Psoas muscle (tissue), 8 donors: ENCODE measurements at regions of chr19 and their contacts with region 1.

Region 1: DNA sequence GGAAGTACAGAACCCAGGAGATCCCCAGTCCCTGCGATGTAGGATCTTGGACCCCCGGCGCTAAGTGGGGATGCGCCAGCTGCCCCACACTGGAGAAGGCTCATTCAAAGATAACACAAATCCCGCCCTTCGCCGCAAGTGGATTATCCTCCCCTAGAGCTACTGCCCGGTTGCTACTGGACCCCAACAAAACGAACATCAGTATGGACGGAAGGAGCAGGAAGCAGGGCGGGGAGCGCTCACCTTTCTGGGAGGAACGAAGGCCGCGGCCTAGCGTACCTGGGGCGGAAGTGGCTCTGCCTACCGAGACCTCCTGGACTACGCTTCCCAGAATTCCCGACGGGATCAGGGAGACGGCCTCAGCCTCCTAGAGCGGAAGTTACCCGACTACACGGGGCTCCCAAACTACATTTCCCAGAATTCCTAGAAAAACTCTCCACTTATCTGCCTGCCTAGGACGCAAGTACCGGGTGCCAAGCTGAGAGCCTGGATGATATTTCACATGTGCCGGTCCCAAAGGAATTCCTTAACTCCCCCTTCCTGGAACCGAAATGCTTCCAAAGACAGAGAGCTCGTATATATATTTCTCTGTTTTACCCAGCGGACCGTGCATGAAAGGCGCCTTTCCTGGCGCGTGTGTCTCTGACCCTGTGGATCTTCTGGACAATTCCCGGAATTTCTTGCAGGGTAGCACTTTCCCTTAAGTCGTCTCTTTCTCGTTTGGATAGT is at the start of gene ZNF112:
- DNase-seq: peak; percentile 80 to 91
- ATAC-seq: peak; percentile 98 to 100 (median 100)
- H3K4me3 ChIP-seq: peak within 1 kb of the TSS; percentile 79
- H3K27ac ChIP-seq: peak within 1 kb of the TSS; percentile 55
- H3K4me1 ChIP-seq: peaks cover 5% of the 10 kb centered on the region
- H3K27me3 ChIP-seq: no peaks in the 10 kb centered on the region
- CTCF ChIP-seq: no peak
- total RNA-seq, gene ZNF112: 1.4 to 4.8 (median 1.7) TPM

Region 2: GRCh38 chr19:44113138-44113783 is 243.3 kb before region 1 on chr19 and contains the start of gene ZNF225:
- intact Hi-C with region 1: loop called in 1 of 2 experiments (anchors 10 kb)
- DNase-seq: peak; percentile 93 to 95
- ATAC-seq: peak; percentile 99 to 100 (median 100)
- H3K4me3 ChIP-seq: peak within 1 kb of the TSS; percentile 93
- H3K27ac ChIP-seq: peak within 1 kb of the TSS; percentile 88
- H3K4me1 ChIP-seq: peaks cover 15% of the 10 kb centered on the region
- H3K27me3 ChIP-seq: no peaks in the 10 kb centered on the region
- CTCF ChIP-seq: peak; percentile 10
- total RNA-seq, gene ZNF225: 0.61 to 2.9 (median 1.4) TPM

Region 3: DNA sequence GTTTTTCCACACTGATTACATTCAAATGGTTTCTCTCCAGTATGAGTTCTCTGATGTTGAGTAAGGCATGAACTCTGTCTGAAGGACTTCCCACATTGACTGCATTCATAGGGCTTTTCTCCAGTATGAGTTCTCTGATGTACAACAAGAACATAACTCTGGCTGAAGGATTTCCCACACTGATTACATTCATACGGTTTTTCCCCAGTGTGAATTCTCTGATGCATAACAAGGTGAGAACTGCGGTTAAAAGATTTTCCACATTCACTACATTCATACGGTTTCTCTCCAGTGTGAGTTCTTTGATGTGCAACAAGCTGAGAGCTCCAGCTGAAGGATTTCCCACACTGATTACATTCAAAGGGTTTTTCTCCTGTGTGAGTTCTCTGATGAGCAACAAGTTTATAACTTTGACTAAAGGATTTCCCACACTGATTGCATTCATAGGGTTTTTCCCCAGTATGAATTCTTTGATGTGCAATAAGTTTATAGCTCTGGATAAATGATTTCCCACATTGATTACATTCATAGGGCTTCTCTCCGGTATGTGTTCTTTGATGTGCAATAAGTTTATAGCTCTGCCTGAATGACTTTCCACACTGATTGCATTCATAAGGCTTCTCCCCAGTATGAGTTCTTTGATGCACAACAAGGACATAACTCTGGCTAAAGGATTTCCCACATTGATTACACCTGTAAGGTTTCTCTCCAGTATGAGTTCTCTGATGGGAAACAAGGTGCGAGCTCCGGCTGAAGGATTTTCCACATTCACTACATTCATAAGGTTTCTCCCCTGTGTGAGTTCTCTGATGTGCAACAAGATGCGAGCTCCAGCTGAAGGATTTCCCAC is 120.2 kb after region 1 on chr19:
- intact Hi-C with region 1: no loop called
- DNase-seq: no peak
- ATAC-seq: no peak
- H3K4me3 ChIP-seq: no peak overlapping the region
- H3K27ac ChIP-seq: no peak overlapping the region
- H3K4me1 ChIP-seq: no peaks in the 10 kb centered on the region
- H3K27me3 ChIP-seq: peaks cover 0 to 2% (median 0%) of the 10 kb centered on the region in 3 donors
- CTCF ChIP-seq: no peak

Region 4: GRCh38 chr19:44496711-44497110 is 140.2 kb after region 1 on chr19:
- intact Hi-C with region 1: no loop called
- DNase-seq: no peak
- ATAC-seq: no peak
- H3K4me3 ChIP-seq: no peak overlapping the region
- H3K27ac ChIP-seq: no peak overlapping the region
- H3K4me1 ChIP-seq: peaks cover 5% of the 10 kb centered on the region
- H3K27me3 ChIP-seq: no peaks in the 10 kb centered on the region
- CTCF ChIP-seq: no peak